Activated naive CD4-positive, alpha-beta T cell treated with anti-CD3 and anti-CD28 coated beads for 36 hours (primary cell): ENCODE measurements at regions of chr18 and their contacts with region 1.

Region 1: GRCh38 chr18:8608795-8609658 is at the start of gene RAB12:
- DNase-seq: peak; percentile 87
- H3K4me3 Mint-ChIP-seq: peak within 1 kb of the TSS; percentile 89
- H3K27ac Mint-ChIP-seq: peak within 1 kb of the TSS; percentile 91
- H3K4me1 Mint-ChIP-seq: peaks cover 47% of the 10 kb centered on the region
- H3K27me3 Mint-ChIP-seq: no peaks in the 10 kb centered on the region
- total RNA-seq, gene RAB12: 11.0 to 11.9 TPM

Region 2: GRCh38 chr18:7950380-7951143 is 658.5 kb before region 1 on chr18:
- CTCF ChIA-PET with region 1: no interaction called
- intact Hi-C with region 1: loop called (anchors 10 kb)
- DNase-seq: peak; percentile 16
- H3K4me3 Mint-ChIP-seq: no peak overlapping the region
- H3K27ac Mint-ChIP-seq: no peak overlapping the region
- H3K4me1 Mint-ChIP-seq: peaks cover 15% of the 10 kb centered on the region
- H3K27me3 Mint-ChIP-seq: no peaks in the 10 kb centered on the region

Region 3: GRCh38 chr18:8584798-8585197 is 24.2 kb before region 1 on chr18:
- CTCF ChIA-PET with region 1: no interaction called
- intact Hi-C with region 1: no loop called
- DNase-seq: no peak
- H3K4me3 Mint-ChIP-seq: no peak overlapping the region
- H3K27ac Mint-ChIP-seq: no peak overlapping the region
- H3K4me1 Mint-ChIP-seq: no peaks in the 10 kb centered on the region
- H3K27me3 Mint-ChIP-seq: peaks cover 10% of the 10 kb centered on the region

Region 4: GRCh38 chr18:8704361-8705279 is 95.6 kb after region 1 on chr18:
- CTCF ChIA-PET with region 1: no interaction called
- intact Hi-C with region 1: loop called (anchors 2 kb)
- DNase-seq: peak; percentile 82
- H3K4me3 Mint-ChIP-seq: peak overlapping the region; percentile 80
- H3K27ac Mint-ChIP-seq: no peak overlapping the region
- H3K4me1 Mint-ChIP-seq: peaks cover 12% of the 10 kb centered on the region
- H3K27me3 Mint-ChIP-seq: peaks cover 45% of the 10 kb centered on the region

Region 5: GRCh38 chr18:9102508-9103375 is 493.7 kb after region 1 on chr18 and contains the start of gene NDUFV2:
- CTCF ChIA-PET with region 1: no interaction called
- intact Hi-C with region 1: loop called (anchors 2 kb)
- DNase-seq: peak; percentile 98
- H3K4me3 Mint-ChIP-seq: peak within 1 kb of the TSS; percentile 81
- H3K27ac Mint-ChIP-seq: peak within 1 kb of the TSS; percentile 95
- H3K4me1 Mint-ChIP-seq: peaks cover 43% of the 10 kb centered on the region
- H3K27me3 Mint-ChIP-seq: no peaks in the 10 kb centered on the region
- total RNA-seq, gene NDUFV2: 290 to 303 TPM

Region 6: DNA sequence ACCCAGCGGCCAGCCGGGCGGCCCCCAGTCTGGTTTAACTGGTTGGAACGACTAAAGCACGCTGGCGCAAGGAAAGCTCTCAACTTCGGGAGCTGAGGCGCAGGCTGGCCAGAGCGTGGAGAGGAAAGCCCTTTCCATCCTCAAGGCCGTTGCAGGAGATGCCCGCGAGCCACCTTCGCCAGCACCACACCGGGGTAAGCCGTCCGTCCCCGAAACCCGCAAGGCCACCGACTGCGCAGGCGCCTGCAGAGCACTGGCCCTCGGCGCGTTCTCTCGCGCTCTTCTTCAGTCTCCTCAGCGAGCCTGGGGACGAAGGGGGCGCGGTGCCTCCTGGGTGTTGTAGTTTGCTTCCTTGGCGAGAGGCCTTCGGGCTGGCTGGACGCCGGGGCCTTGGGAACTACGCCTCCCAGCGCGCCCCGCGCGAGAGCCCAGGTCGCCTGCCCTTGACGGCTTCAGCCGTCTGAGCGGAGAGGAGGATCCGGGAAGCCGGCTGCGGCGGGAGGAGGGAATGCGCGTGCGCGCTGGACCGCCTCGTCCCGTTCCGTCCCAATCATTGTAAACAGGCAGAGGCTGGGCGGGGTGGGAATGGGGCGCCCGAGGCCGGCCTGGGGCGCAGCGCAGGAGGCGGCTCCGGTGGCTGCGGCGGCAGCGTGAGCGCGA is 866.1 kb after region 1 on chr18 and contains the start of gene RALBP1:
- CTCF ChIA-PET with region 1: no interaction called
- intact Hi-C with region 1: loop called (anchors 2 kb)
- DNase-seq: peak; percentile 99
- H3K4me3 Mint-ChIP-seq: peak within 1 kb of the TSS; percentile 89
- H3K27ac Mint-ChIP-seq: peak within 1 kb of the TSS; percentile 90
- H3K4me1 Mint-ChIP-seq: peaks cover 26% of the 10 kb centered on the region
- H3K27me3 Mint-ChIP-seq: peaks cover 3% of the 10 kb centered on the region
- total RNA-seq, gene RALBP1: 46.9 to 51.1 TPM